Left colon (tissue), 2 donors: ENCODE measurements at regions of chr13 and their contacts with region 1.

Region 1: DNA sequence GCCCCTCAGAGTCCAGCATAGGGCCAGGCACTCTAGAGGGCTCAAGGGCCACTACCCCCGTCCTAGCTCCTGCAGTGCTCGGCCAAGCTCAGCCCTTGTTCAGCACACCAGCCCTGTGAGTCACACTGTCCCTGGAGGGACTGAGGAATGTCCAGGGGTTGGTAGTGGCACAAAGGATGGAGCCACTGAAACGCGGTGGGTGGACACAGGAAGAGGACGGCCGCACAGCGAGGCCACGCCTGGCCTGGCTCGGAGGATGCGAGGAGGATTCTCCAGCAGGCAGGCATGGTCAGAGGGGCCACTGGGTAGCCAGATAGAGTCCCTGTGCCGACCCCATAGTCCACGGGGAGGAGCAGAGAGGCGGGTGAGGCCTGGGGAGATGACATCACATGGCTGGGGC is 45.7 kb downstream of the C1QTNF9 start:
- DNase-seq: no peak
- ATAC-seq: no peak

Region 2: GRCh38 chr13:22929381-22930126 is 1425.5 kb before region 1 on chr13:
- intact Hi-C with region 1: loop called in 1 of 2 experiments (anchors 10 kb)
- DNase-seq: no peak
- ATAC-seq: no peak

Region 3: GRCh38 chr13:24168392-24168750 is 186.7 kb before region 1 on chr13:
- intact Hi-C with region 1: no loop called
- DNase-seq: no peak
- ATAC-seq: no peak

Region 4: GRCh38 chr13:24264976-24265375 is 90.1 kb before region 1 on chr13:
- intact Hi-C with region 1: no loop called
- DNase-seq: peak in 1 of 2 donors; percentile 37
- ATAC-seq: peak; percentile 31

Region 5: GRCh38 chr13:24520733-24521132 is 165.6 kb after region 1 on chr13:
- intact Hi-C with region 1: no loop called
- DNase-seq: no peak
- ATAC-seq: no peak